ENCODE measurements at regions of chr12 and their contacts with region 1.

Region 1: DNA sequence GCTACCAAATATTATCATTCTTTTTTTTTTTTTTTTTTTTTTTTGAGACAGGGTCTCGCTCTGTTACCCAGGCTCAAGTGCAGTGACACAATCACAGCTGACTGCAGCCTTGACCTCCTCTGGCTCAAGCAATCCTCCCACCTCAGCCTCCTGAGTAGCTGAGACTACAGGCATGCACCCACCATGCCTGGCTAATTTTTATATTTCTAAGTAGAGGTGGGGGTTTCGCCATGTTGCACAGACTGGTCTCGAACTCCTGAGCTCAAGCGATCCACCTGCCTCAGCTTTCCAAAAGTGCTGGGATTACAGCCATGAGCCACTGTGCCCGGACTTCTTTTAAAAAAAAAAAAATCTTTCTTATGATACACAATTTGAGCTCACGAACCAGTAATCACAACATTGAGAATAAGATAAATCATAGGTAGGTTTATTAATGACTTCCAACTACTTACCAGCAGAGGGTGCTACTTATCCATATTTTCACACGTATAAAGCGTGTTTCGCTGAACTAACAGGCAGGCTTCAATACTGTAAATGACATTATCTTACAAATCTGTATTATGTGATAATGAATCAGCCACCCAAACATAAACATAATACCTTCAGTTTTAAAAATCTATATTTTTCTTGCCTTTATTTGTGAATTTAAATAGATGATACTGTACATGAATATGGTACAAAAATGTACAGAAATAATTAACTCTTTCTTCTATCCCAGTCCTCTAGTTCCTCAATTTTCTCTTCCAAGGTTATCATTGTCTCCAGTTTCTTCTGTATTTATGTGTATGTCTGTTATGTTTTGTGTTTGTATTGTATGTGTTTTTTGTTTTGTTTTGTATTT is 42.5 kb upstream of the BCAT1 start:
- DNase-seq: no peak
- H3K4me3 ChIP-seq: no peak overlapping the region
- H3K27ac ChIP-seq: no peak overlapping the region
- H3K4me1 ChIP-seq: no peaks in the 10 kb centered on the region
- H3K27me3 ChIP-seq: no peaks in the 10 kb centered on the region
- CTCF ChIP-seq: peak; percentile 37 to 65 (median 62)
- POLR2A ChIP-seq: no peak

Region 2: DNA sequence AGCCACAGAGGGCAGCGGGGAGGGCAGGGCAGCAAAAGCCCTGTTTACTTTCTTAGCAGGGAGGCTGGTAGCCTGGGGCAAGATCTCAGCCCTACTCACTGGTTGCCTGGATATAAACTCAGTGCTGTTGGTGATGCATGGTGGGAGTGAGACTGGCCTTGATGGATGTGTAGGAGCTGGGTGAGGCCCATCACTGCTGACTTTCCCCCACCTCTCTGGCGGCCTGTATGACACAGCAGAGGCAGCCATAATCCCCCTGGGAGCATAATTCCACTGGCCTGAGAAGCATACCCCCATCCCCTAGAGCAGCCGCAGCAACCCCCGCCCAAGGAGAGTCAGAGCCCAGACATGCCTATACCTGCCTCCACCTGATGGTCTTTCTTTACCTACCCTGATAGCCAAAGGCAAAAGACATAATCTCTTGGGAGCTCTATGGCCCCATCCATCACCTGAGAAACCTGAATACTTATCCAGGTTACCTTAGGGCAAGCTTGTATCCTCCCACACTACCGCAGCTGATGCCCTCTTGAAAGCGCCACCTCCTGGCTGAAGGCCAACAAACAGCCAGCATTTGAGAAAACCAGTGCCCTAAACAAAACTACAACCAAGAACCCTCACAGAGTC is 144.2 kb after region 1 on chr12:
- intact Hi-C with region 1: no loop called
- DNase-seq: no peak
- H3K4me3 ChIP-seq: no peak overlapping the region
- H3K27ac ChIP-seq: no peak overlapping the region
- H3K4me1 ChIP-seq: no peaks in the 10 kb centered on the region
- H3K27me3 ChIP-seq: no peaks in the 10 kb centered on the region
- CTCF ChIP-seq: no peak
- POLR2A ChIP-seq: no peak

Region 3: DNA sequence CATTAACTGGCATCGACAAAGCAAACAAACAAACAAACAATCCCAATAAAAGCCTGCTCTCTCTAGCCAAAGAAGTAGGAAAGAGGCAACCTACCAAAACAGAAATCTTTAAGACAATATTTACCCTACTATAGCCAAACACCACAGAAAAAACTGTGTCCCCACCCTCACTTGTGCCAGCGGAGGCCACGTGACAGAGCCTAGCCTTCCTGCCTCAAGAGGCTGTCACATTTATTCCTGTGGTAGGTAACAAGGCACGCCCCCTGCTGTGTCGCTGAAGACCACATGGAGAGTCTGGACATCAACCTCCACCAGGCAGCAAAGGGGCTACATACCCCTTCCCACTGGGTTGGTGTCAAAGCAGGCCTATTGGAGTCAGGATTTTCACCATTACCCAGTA is 413.5 kb after region 1 on chr12:
- intact Hi-C with region 1: loop called (anchors 5 kb)
- DNase-seq: no peak
- H3K4me3 ChIP-seq: no peak overlapping the region
- H3K27ac ChIP-seq: no peak overlapping the region
- H3K4me1 ChIP-seq: no peaks in the 10 kb centered on the region
- H3K27me3 ChIP-seq: no peaks in the 10 kb centered on the region
- CTCF ChIP-seq: no peak
- POLR2A ChIP-seq: no peak

Measured in vagina (tissue), 2 donors.